Heart right ventricle (tissue), 16 donors: ENCODE measurements at regions of chr2 and their contacts with region 1.

Region 1: DNA sequence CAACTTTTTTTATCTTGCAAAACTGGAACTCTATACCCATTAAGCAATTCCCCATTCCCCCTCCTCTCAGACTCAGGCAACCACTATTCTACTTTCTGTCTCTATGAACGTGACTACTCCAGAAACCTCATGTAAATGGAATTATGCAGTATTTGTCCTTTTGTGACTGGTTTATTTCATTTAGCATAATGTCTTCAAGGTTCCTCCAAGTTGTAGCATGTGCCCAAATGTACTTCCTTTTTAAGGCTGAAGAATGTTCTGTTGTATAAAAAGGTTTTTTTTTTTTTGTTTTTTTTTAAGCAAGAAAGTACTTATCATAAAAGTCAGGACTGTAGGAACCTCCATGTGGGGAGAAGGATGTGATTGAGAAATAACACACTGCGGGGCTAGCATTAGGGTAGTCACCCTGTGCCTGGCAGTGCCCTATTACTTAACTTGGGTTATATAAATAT is 262.9 kb upstream of the FBXO11 start:
- DNase-seq: no peak
- ATAC-seq: peak in 2 of 8 donors; percentile 48 to 68
- H3K4me3 ChIP-seq: no peak overlapping the region
- H3K27ac ChIP-seq: peak overlapping the region in 1 of 10 donors; percentile 70
- H3K4me1 ChIP-seq: peaks cover 0 to 31% (median 0%) of the 10 kb centered on the region in 9 donors
- H3K27me3 ChIP-seq: no peaks in the 10 kb centered on the region
- CTCF ChIP-seq: no peak

Region 2: DNA sequence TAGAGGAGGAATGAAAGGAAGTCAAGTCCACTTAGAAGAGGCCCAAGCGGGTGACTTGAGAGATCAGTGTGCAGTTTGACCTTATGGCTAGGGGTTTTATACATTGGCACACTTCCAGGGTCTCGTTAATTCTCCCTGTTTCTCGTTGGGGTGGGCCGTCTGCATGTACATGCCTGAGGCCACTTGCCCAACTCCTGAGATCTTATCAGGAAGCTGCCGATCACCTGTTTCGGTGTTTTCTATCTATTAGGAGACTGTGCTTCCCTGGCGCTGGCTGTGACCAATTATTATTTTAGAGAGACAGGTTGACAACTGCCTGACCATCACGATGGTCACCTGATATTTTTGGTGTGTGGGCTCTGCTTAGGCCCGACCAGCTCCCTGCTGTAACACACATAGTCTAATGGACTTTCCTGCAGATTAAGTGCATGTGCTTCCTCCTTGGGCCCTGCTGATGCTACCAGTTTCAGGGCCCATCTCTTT is 417.3 kb before region 1 on chr2:
- intact Hi-C with region 1: no loop called
- DNase-seq: no peak
- ATAC-seq: no peak
- H3K4me3 ChIP-seq: no peak overlapping the region
- H3K27ac ChIP-seq: peak overlapping the region in 1 of 10 donors; percentile 58
- H3K4me1 ChIP-seq: peaks cover 0 to 18% (median 0%) of the 10 kb centered on the region in 9 donors
- H3K27me3 ChIP-seq: peaks cover 0 to 13% (median 0%) of the 10 kb centered on the region in 7 donors
- CTCF ChIP-seq: no peak

Region 3: DNA sequence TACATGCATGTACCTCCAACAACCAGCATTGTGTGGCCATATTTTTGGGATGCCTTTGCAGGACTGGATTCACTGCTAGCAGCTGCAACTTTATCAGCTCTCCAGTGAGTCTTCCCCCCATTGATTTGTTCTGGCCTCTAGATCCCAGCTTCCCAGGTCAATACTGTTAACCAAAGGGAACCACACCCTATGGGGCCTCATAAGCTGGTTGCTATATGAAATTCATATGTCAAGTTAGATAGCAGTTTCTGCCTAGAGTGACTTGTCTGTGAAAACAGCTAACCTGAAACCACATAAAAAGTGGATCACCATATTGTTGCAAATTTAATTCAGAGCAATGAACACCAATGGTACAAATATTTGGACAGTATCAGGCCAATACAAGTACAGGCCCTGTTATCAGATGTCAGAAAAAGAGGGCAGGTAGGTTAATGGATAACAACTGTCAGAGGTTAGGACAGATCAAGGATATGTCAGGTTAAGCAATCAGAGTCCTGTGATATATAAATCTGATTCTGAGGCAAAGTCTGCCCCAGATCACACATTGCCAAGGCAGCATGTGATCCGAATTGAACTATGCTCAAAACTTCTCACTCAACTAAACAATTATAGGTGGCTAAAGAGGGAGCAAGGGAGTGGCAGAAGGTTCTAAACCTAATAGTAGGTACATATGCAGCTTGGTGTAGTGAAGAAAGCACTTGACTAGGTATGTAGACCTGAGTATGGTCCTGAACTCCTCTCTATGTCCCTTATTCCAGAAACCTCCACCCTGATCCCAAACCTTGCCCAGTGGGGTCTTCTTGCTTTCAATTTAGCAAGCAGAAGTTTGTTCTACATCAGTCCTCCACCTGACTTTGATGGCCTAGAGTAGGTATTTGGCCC is 50.6 kb after region 1 on chr2:
- intact Hi-C with region 1: loop called in 1 of 10 experiments (anchors 5 kb)
- DNase-seq: no peak
- ATAC-seq: no peak
- H3K4me3 ChIP-seq: no peak overlapping the region
- H3K27ac ChIP-seq: peak overlapping the region in 1 of 10 donors; percentile 49
- H3K4me1 ChIP-seq: peaks cover 0 to 18% (median 0%) of the 10 kb centered on the region in 9 donors
- H3K27me3 ChIP-seq: no peaks in the 10 kb centered on the region
- CTCF ChIP-seq: no peak